MCF 10A (cell line): ENCODE measurements at regions of chr3 and their contacts with region 1.

Region 1: GRCh38 chr3:195542698-195543499 is at the start of gene PPP1R2:
- DNase-seq: peak; percentile 94
- H3K4me3 Mint-ChIP-seq: peak within 1 kb of the TSS; percentile 76
- H3K27ac Mint-ChIP-seq: peak within 1 kb of the TSS; percentile 92
- H3K4me1 Mint-ChIP-seq: peaks cover 31% of the 10 kb centered on the region
- H3K27me3 Mint-ChIP-seq: no peaks in the 10 kb centered on the region
- CTCF ChIP-seq: no peak
- total RNA-seq, gene PPP1R2: 53.0 and 68.6 TPM in 2 replicates

Region 2: GRCh38 chr3:195522254-195523023 is 20.5 kb before region 1 on chr3:
- CTCF ChIA-PET with region 1: interaction called, 6 read pairs
- POLR2A ChIA-PET with region 1: interaction called, 20 read pairs
- intact Hi-C with region 1: no loop called
- DNase-seq: peak; percentile 59
- H3K4me3 Mint-ChIP-seq: no peak overlapping the region
- H3K27ac Mint-ChIP-seq: no peak overlapping the region
- H3K4me1 Mint-ChIP-seq: no peaks in the 10 kb centered on the region
- H3K27me3 Mint-ChIP-seq: no peaks in the 10 kb centered on the region
- CTCF ChIP-seq: peak; percentile 53

Region 3: GRCh38 chr3:195532834-195533233 is 10.1 kb before region 1 on chr3:
- CTCF ChIA-PET with region 1: interaction called, 3 read pairs
- POLR2A ChIA-PET with region 1: interaction called, 13 read pairs
- intact Hi-C with region 1: no loop called
- DNase-seq: no peak
- H3K4me3 Mint-ChIP-seq: no peak overlapping the region
- H3K27ac Mint-ChIP-seq: no peak overlapping the region
- H3K4me1 Mint-ChIP-seq: peaks cover 5% of the 10 kb centered on the region
- H3K27me3 Mint-ChIP-seq: no peaks in the 10 kb centered on the region
- CTCF ChIP-seq: no peak